Psoas muscle (tissue), 8 donors: ENCODE measurements at regions of chr6 and their contacts with region 1.

Region 1: DNA sequence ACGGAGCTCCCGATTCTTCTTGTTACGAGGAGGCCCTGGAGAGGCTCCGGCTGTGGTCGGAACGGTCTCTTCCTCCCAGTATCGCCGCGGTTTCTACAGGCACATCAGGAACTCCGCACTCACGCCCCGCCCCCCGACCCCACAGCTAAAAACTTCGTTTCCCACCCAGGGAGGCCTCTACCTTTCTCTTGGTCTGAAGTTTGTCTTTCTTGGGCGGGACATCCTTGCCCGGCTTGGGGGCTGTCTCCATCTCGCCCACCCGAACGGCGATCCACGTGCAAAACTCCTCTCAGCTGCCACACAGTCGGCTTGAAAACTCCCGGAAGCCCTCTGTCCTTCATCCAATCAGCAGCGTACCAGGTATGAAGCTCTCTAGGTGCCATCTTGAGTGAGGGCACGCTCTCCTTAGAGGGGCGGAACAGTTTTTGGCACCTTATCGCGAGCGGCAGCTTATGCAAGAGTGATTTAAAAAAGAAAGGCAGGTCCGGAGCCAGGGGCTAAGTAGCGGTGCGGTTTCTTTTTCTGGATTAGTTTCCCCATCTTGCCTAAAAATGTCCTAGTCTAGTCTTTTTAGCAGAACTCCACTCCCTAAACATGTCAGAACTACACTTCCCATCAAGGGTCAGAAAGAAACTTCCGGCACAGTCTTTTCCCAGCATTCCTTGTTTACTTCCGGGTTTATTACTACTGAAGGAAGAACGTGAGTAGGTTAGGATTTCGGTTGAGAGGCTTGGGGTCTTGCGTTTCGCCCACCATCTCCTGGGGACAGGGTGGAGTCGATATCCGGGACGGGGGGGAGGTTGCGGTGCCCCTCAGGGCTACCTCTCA is at the starts of genes PFDN6 and WDR46:
- DNase-seq: peak; percentile 76 to 85
- ATAC-seq: peak; percentile 94 to 97 (median 96)
- H3K4me3 ChIP-seq: peak within 1 kb of the TSS; percentile 85
- H3K27ac ChIP-seq: peak within 1 kb of the TSS; percentile 77
- H3K4me1 ChIP-seq: peaks cover 18% of the 10 kb centered on the region
- H3K27me3 ChIP-seq: no peaks in the 10 kb centered on the region
- CTCF ChIP-seq: no peak
- total RNA-seq, gene PFDN6: 57.2 to 87.6 (median 75.7) TPM
- total RNA-seq, gene WDR46: 22.4 to 46.0 (median 34.7) TPM

Region 2: GRCh38 chr6:32127717-32128592 is 1161.2 kb before region 1 on chr6 and contains the start of gene ATF6B:
- intact Hi-C with region 1: loop called in 1 of 2 experiments (anchors 5 kb)
- DNase-seq: peak; percentile 99
- ATAC-seq: peak; percentile 92 to 96 (median 96)
- H3K4me3 ChIP-seq: peak within 1 kb of the TSS; percentile 95
- H3K27ac ChIP-seq: peak within 1 kb of the TSS; percentile 89
- H3K4me1 ChIP-seq: peaks cover 26% of the 10 kb centered on the region
- H3K27me3 ChIP-seq: no peaks in the 10 kb centered on the region
- CTCF ChIP-seq: no peak
- total RNA-seq, gene ATF6B: 17.2 to 23.8 (median 19.9) TPM

Region 3: GRCh38 chr6:32967151-32968091 is 321.7 kb before region 1 on chr6:
- intact Hi-C with region 1: no loop called
- DNase-seq: no peak
- ATAC-seq: no peak
- H3K4me3 ChIP-seq: peak overlapping the region; percentile 79
- H3K27ac ChIP-seq: peak overlapping the region; percentile 100
- H3K4me1 ChIP-seq: peaks cover 22% of the 10 kb centered on the region
- H3K27me3 ChIP-seq: no peaks in the 10 kb centered on the region
- CTCF ChIP-seq: peak; percentile 46

Region 4: GRCh38 chr6:33271458-33272274 is 17.5 kb before region 1 on chr6 and contains the starts of genes RPS18 and VPS52:
- intact Hi-C with region 1: loop called in 1 of 2 experiments (anchors 2 kb)
- DNase-seq: peak; percentile 89 to 94
- ATAC-seq: peak; percentile 94 to 97 (median 96)
- H3K4me3 ChIP-seq: peak within 1 kb of the TSS; percentile 81
- H3K27ac ChIP-seq: peak within 1 kb of the TSS; percentile 97
- H3K4me1 ChIP-seq: peaks cover 50% of the 10 kb centered on the region
- H3K27me3 ChIP-seq: no peaks in the 10 kb centered on the region
- CTCF ChIP-seq: no peak
- total RNA-seq, gene RPS18: 1,108 to 1,410 (median 1,267) TPM
- total RNA-seq, gene VPS52: 35.7 to 52.5 (median 46.8) TPM

Region 5: GRCh38 chr6:33276864-33277662 is 12.1 kb before region 1 on chr6 and contains the start of gene B3GALT4:
- intact Hi-C with region 1: loop called in 1 of 2 experiments (anchors 1 kb)
- DNase-seq: peak; percentile 80 to 85
- ATAC-seq: peak; percentile 49 to 78 (median 67)
- H3K4me3 ChIP-seq: peak within 1 kb of the TSS; percentile 68
- H3K27ac ChIP-seq: peak within 1 kb of the TSS; percentile 78
- H3K4me1 ChIP-seq: peaks cover 39% of the 10 kb centered on the region
- H3K27me3 ChIP-seq: no peaks in the 10 kb centered on the region
- CTCF ChIP-seq: peak; percentile 49
- total RNA-seq, gene B3GALT4: 1.3 to 3.6 (median 1.7) TPM

Region 6: DNA sequence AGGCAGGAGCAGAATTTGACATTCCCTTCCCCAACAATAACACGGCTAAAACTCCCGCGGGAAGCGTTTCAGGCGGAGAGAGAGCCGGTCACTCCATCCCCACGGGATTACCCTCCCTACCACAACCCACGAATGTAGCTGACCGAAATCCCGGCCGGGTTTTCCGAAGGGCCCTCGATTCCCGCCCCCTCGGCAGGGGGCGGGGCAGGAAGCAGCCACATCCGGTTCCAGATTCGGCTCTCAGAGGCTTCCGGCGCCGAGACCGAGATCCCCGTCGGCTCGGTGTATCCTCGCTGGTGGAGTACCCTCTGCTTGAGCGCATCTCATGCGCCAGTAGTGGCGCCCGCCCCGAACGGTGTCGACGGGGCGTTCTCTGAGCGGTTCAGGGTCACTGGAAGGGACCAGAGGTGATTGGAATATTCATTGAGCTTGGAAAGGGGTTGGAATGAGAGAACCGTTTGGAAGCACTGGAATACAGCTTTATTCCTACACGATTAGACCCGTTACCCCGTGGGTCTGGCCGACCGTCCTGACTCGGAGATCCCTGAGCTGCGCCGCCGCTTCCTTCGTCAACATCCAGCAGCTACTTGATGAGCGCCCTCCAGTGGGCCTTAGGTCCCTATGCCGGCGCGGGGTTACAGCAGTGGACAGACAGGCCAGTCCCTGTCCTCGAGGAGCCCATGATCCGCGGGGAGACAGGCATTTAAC is 10.3 kb after region 1 on chr6:
- intact Hi-C with region 1: no loop called
- DNase-seq: peak; percentile 93 to 96
- ATAC-seq: peak; percentile 80 to 89 (median 86)
- H3K4me3 ChIP-seq: peak overlapping the region; percentile 82
- H3K27ac ChIP-seq: peak overlapping the region; percentile 97
- H3K4me1 ChIP-seq: peaks cover 26% of the 10 kb centered on the region
- H3K27me3 ChIP-seq: no peaks in the 10 kb centered on the region
- CTCF ChIP-seq: peak; percentile 69